ENCODE measurements at regions of chr13 and their contacts with region 1.

Region 1: GRCh38 chr13:30114571-30115256 is 192.6 kb downstream of the KATNAL1 start:
- DNase-seq: no peak
- ATAC-seq: peak; percentile 95
- H3K4me3 ChIP-seq: peak overlapping the region; percentile 63
- H3K27ac ChIP-seq: no peak overlapping the region
- H3K4me1 ChIP-seq: peaks cover 9% of the 10 kb centered on the region; the same call in 1 of the 2 replicates
- H3K27me3 ChIP-seq: no peaks in the 10 kb centered on the region
- CTCF ChIP-seq: peak; percentile 86 to 96 (median 95)
- EP300 ChIP-seq: peak in 1 of 2 experiments; percentile 19; a peak in 1 of 4 replicates
- POLR2A ChIP-seq: peak; percentile 84
- RAD21 ChIP-seq: peak; percentile 79

Region 2: GRCh38 chr13:29508130-29508875 is 606.4 kb before region 1 on chr13:
- CTCF ChIA-PET with region 1: interaction called, 29 read pairs
- POLR2A ChIA-PET with region 1: no interaction called
- RAD21 ChIA-PET with region 1: interaction called, 12 read pairs
- SMC1A ChIA-PET with region 1: interaction called, 7 read pairs
- in situ Hi-C with region 1: loop called (anchors 5 kb)
- intact Hi-C with region 1: loop called (anchors 1 kb)
- DNase-seq: no peak
- ATAC-seq: peak; percentile 94
- H3K4me3 ChIP-seq: no peak overlapping the region
- H3K27ac ChIP-seq: no peak overlapping the region
- H3K4me1 ChIP-seq: no peaks in the 10 kb centered on the region
- H3K27me3 ChIP-seq: no peaks in the 10 kb centered on the region
- CTCF ChIP-seq: peak; percentile 86 to 98 (median 98)
- EP300 ChIP-seq: no peak
- POLR2A ChIP-seq: peak; percentile 67
- RAD21 ChIP-seq: peak; percentile 91

Region 3: GRCh38 chr13:29589234-29589633 is 525.5 kb before region 1 on chr13:
- CTCF ChIA-PET with region 1: no interaction called
- POLR2A ChIA-PET with region 1: no interaction called
- RAD21 ChIA-PET with region 1: no interaction called
- SMC1A ChIA-PET with region 1: no interaction called
- in situ Hi-C with region 1: no loop called
- intact Hi-C with region 1: no loop called
- DNase-seq: no peak
- ATAC-seq: no peak
- H3K4me3 ChIP-seq: no peak overlapping the region
- H3K27ac ChIP-seq: no peak overlapping the region
- H3K4me1 ChIP-seq: peaks cover 7% of the 10 kb centered on the region; the same call in 1 of the 2 replicates
- H3K27me3 ChIP-seq: no peaks in the 10 kb centered on the region
- CTCF ChIP-seq: no peak
- EP300 ChIP-seq: no peak
- POLR2A ChIP-seq: peak; percentile 32; the same call in 1 of the 2 replicates
- RAD21 ChIP-seq: no peak

Region 4: GRCh38 chr13:29771247-29771646 is 343.5 kb before region 1 on chr13:
- CTCF ChIA-PET with region 1: interaction called, 286 read pairs
- POLR2A ChIA-PET with region 1: no interaction called
- RAD21 ChIA-PET with region 1: interaction called, 163 read pairs
- SMC1A ChIA-PET with region 1: interaction called, 165 read pairs
- in situ Hi-C with region 1: loop called (anchors 5 kb)
- intact Hi-C with region 1: loop called (anchors 1 kb)
- DNase-seq: no peak
- ATAC-seq: peak; percentile 74
- H3K4me3 ChIP-seq: no peak overlapping the region
- H3K27ac ChIP-seq: no peak overlapping the region
- H3K4me1 ChIP-seq: no peaks in the 10 kb centered on the region
- H3K27me3 ChIP-seq: no peaks in the 10 kb centered on the region
- CTCF ChIP-seq: peak in 2 of 3 experiments; percentile 20 to 56; a peak in 4 of 6 replicates
- EP300 ChIP-seq: no peak
- POLR2A ChIP-seq: no peak
- RAD21 ChIP-seq: peak; percentile 68

Region 5: GRCh38 chr13:29850224-29850898 is 264.4 kb before region 1 on chr13 and contains the start of gene UBL3:
- CTCF ChIA-PET with region 1: interaction called, 86 read pairs
- POLR2A ChIA-PET with region 1: no interaction called
- RAD21 ChIA-PET with region 1: interaction called, 20 read pairs
- SMC1A ChIA-PET with region 1: interaction called, 67 read pairs
- in situ Hi-C with region 1: loop called (anchors 5 kb)
- intact Hi-C with region 1: loop called (anchors 1 kb)
- DNase-seq: peak; percentile 62
- ATAC-seq: peak; percentile 84
- H3K4me3 ChIP-seq: peak within 1 kb of the TSS; percentile 77
- H3K27ac ChIP-seq: peak within 1 kb of the TSS; percentile 54
- H3K4me1 ChIP-seq: no peaks in the 10 kb centered on the region
- H3K27me3 ChIP-seq: no peaks in the 10 kb centered on the region
- CTCF ChIP-seq: no peak
- EP300 ChIP-seq: no peak
- POLR2A ChIP-seq: peak; percentile 87
- RAD21 ChIP-seq: no peak
- polyA plus RNA-seq, gene UBL3: 5.5 to 6.1 TPM

Region 6: DNA sequence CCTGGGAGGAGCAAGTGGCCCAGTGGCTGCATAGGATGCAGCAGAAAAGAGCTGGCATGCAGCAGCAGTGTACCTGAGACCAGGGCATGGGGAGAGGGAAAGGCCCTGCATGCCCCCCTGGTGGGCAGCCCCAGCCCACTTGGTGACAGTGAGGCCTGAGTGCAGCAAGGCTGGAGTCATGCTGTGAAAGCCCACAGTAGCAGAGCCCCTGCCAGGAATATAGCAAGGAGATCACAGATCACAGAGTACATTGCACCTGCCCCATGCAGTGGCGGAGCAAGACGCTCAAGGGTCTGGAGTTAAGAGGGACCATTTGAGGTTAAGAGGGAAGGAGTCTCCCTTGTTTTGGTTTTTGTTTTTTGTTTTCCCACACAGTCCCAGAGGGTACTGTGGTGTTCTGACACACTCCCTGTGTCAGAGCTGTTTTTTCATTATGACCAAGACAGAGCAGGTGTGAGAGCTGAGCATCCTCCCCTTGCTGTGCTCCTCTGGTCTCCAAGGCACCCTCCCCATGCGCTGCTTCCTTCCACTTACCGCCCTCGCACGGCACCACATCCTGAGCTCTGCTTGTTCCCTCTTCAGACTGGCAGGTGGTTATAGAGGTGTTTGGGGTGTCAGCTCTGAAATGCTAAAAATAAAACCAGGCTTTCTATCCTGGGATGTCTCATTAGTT is 179.3 kb before region 1 on chr13:
- CTCF ChIA-PET with region 1: interaction called, 54 read pairs
- POLR2A ChIA-PET with region 1: no interaction called
- RAD21 ChIA-PET with region 1: interaction called, 9 read pairs
- SMC1A ChIA-PET with region 1: interaction called, 10 read pairs
- in situ Hi-C with region 1: no loop called
- intact Hi-C with region 1: loop called (anchors 2 kb)
- DNase-seq: peak; percentile 74
- ATAC-seq: peak; percentile 91
- H3K4me3 ChIP-seq: peak overlapping the region; percentile 50; the same call in 1 of the 2 replicates
- H3K27ac ChIP-seq: no peak overlapping the region
- H3K4me1 ChIP-seq: peaks cover 20% of the 10 kb centered on the region
- H3K27me3 ChIP-seq: no peaks in the 10 kb centered on the region
- CTCF ChIP-seq: no peak
- EP300 ChIP-seq: peak; percentile 74 to 75; a peak in 3 of 4 replicates
- POLR2A ChIP-seq: no peak
- RAD21 ChIP-seq: no peak

Region 7: GRCh38 chr13:30097089-30097488 is 17.6 kb before region 1 on chr13:
- CTCF ChIA-PET with region 1: interaction called, 10 read pairs
- POLR2A ChIA-PET with region 1: no interaction called
- RAD21 ChIA-PET with region 1: interaction called, 3 read pairs
- SMC1A ChIA-PET with region 1: interaction called, 7 read pairs
- in situ Hi-C with region 1: no loop called
- intact Hi-C with region 1: no loop called
- DNase-seq: no peak
- ATAC-seq: no peak
- H3K4me3 ChIP-seq: no peak overlapping the region
- H3K27ac ChIP-seq: no peak overlapping the region
- H3K4me1 ChIP-seq: no peaks in the 10 kb centered on the region
- H3K27me3 ChIP-seq: no peaks in the 10 kb centered on the region; a peak in 1 of 4 replicates
- CTCF ChIP-seq: no peak
- EP300 ChIP-seq: no peak
- POLR2A ChIP-seq: no peak
- RAD21 ChIP-seq: no peak

Region 8: DNA sequence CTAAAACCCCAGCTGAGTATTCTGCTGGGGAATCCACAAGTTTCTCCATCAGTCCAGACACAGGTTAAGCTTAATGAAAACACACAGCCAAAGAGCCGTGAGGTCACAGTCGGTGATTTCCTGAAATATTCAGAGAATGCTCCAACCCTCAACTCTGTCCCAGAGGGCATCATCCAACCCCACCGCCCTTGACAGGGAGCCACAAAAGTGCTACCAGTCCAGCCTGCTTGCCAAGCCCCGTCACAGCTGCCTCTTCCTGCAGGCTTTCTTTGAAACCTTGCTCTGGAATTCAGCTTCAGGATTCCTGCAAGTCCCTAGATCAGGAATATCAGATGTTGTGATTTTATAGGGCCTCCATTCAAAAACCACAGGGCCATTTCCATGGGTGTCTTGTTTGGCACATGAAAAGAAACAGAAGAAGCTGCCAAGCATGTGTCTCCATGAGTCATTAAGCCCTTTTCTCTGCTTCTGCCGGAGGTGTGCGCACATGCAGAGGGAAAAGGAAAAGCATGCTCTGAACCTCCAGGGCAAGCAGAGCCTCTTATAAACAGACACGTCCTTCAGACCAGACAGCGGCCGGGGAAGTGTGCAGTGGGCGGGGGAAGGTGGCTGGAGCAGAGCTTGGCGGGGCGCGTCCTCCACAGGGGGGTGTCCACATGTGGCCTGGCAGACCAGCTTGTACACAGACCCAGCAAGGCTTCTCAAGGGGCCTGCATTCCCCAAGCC is 27.9 kb after region 1 on chr13:
- CTCF ChIA-PET with region 1: interaction called, 8 read pairs
- POLR2A ChIA-PET with region 1: interaction called, 4 read pairs
- RAD21 ChIA-PET with region 1: interaction called, 11 read pairs
- SMC1A ChIA-PET with region 1: interaction called, 5 read pairs
- in situ Hi-C with region 1: no loop called
- intact Hi-C with region 1: no loop called
- DNase-seq: no peak
- ATAC-seq: peak; percentile 46
- H3K4me3 ChIP-seq: no peak overlapping the region
- H3K27ac ChIP-seq: peak overlapping the region; percentile 0; the same call in 1 of the 2 replicates
- H3K4me1 ChIP-seq: peaks cover 60% of the 10 kb centered on the region
- H3K27me3 ChIP-seq: no peaks in the 10 kb centered on the region
- CTCF ChIP-seq: no peak
- EP300 ChIP-seq: no peak
- POLR2A ChIP-seq: no peak
- RAD21 ChIP-seq: no peak

Measured in GM12878 (cell line).